Transverse colon (tissue), 4 donors: ENCODE measurements at regions of chr1 and their contacts with region 1.

Region 1: DNA sequence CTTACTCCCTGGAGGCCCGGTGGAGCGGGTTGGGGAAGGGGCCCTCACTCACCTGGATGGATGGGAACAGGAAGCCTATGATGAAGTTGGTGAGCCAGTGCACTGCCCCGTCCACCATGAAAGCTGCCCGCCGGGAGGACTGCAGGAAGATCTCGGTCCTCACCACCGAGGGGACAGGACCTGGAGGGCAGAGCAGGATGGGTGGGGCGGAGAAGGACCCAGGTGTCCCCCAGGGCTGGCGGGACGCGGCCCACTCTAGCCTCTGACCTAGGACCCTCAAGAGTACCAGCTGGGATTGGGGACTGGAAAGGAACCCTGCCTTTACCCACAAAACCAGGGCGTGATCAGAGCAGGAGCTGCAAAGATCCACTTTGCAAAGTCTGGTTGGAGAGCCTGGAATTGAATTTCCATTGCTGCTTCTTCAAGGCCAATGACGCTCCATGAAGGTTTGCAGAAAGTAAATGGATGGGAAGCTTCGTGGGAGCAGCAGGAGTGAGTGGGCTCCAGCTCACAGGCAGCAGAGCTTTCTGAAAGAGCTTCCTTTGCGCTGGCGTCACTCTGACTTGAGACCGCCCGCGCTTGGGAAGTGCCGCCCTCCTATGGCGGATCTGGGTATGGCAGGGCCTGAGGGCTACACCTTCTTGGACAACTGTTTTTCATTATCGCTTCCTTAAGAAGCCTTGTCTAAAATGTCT is 21.4 kb downstream of the SLC2A7 start:
- DNase-seq: peak; percentile 87
- H3K4me3 ChIP-seq: no peak overlapping the region
- H3K27ac ChIP-seq: no peak overlapping the region
- H3K4me1 ChIP-seq: peaks cover 0 to 10% (median 1%) of the 10 kb centered on the region in 4 donors
- H3K27me3 ChIP-seq: no peaks in the 10 kb centered on the region
- CTCF ChIP-seq: peak; percentile 87 to 97 (median 93)
- EP300 ChIP-seq: no peak
- POLR2A ChIP-seq: no peak

Region 2: DNA sequence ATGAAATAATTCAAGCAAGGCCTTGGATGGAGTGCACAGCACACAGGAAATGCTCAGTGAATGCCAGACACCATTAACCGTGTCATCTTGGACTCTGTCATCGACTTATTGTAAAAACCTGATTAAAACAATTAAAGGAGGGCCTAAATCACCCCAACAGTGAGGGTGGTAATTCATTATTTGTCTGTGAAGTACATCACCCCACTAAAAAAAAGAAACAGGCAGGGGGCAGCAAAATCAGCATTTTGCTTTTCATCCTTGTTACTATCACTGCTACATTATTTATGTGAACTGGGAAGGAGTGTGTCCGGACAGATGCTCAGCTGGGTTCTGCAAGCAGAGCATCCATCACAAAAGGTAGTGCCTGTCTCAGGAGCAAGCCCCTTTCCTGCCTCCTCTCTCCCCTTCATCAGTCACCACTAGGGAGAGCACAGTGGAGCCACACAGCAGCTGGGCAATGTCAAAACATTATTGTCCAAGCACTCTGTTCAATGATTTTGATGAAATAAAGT is 285.9 kb before region 1 on chr1:
- in situ Hi-C with region 1: no loop called
- intact Hi-C with region 1: no loop called
- DNase-seq: no peak
- H3K4me3 ChIP-seq: no peak overlapping the region
- H3K27ac ChIP-seq: no peak overlapping the region
- H3K4me1 ChIP-seq: peaks cover 0 to 18% (median 4%) of the 10 kb centered on the region in 4 donors
- H3K27me3 ChIP-seq: no peaks in the 10 kb centered on the region
- CTCF ChIP-seq: peak in 2 of 5 experiments; percentile 10 to 12
- EP300 ChIP-seq: no peak
- POLR2A ChIP-seq: no peak

Region 3: GRCh38 chr1:8800416-8800815 is 204.4 kb before region 1 on chr1:
- in situ Hi-C with region 1: no loop called
- intact Hi-C with region 1: no loop called
- DNase-seq: no peak
- H3K4me3 ChIP-seq: no peak overlapping the region
- H3K27ac ChIP-seq: no peak overlapping the region
- H3K4me1 ChIP-seq: peaks cover 0 to 9% (median 0%) of the 10 kb centered on the region in 4 donors
- H3K27me3 ChIP-seq: no peaks in the 10 kb centered on the region
- CTCF ChIP-seq: no peak
- EP300 ChIP-seq: no peak
- POLR2A ChIP-seq: no peak

Region 4: GRCh38 chr1:8910914-8911313 is 93.9 kb before region 1 on chr1:
- in situ Hi-C with region 1: loop called in 1 of 4 experiments (anchors 10 kb)
- intact Hi-C with region 1: no loop called
- DNase-seq: no peak
- H3K4me3 ChIP-seq: no peak overlapping the region
- H3K27ac ChIP-seq: no peak overlapping the region
- H3K4me1 ChIP-seq: no peaks in the 10 kb centered on the region
- H3K27me3 ChIP-seq: no peaks in the 10 kb centered on the region
- CTCF ChIP-seq: no peak
- EP300 ChIP-seq: no peak
- POLR2A ChIP-seq: no peak

Region 5: GRCh38 chr1:9101510-9102146 is 96.8 kb after region 1 on chr1:
- in situ Hi-C with region 1: loop called in 3 of 4 experiments (anchors 10 kb)
- intact Hi-C with region 1: loop called (anchors 2 kb)
- DNase-seq: peak; percentile 52
- H3K4me3 ChIP-seq: no peak overlapping the region
- H3K27ac ChIP-seq: no peak overlapping the region
- H3K4me1 ChIP-seq: no peaks in the 10 kb centered on the region
- H3K27me3 ChIP-seq: no peaks in the 10 kb centered on the region
- CTCF ChIP-seq: peak; percentile 48 to 71 (median 59)
- EP300 ChIP-seq: no peak
- POLR2A ChIP-seq: no peak